ENCODE measurements at regions of chr4 and their contacts with region 1.

Region 1: GRCh38 chr4:70687821-70688794 is at the start of gene UTP3:
- DNase-seq: peak; percentile 95
- H3K4me3 ChIP-seq: peak within 1 kb of the TSS; percentile 65 to 82
- H3K27ac ChIP-seq: peak within 1 kb of the TSS; percentile 88 to 95
- H3K4me1 ChIP-seq: peaks cover 6% of the 10 kb centered on the region
- H3K27me3 ChIP-seq: no peaks in the 10 kb centered on the region
- CTCF ChIP-seq: peak; percentile 92 to 98 (median 97)
- POLR2A ChIP-seq: peak; percentile 51
- total RNA-seq, gene UTP3: 13.4 to 19.7 TPM

Region 2: GRCh38 chr4:70704331-70705145 is 16.4 kb after region 1 on chr4:
- intact Hi-C with region 1: loop called (anchors 2 kb)
- DNase-seq: peak; percentile 78
- H3K4me3 ChIP-seq: peak overlapping the region; percentile 82 to 95
- H3K27ac ChIP-seq: peak overlapping the region; percentile 92 to 97
- H3K4me1 ChIP-seq: peaks cover 3% of the 10 kb centered on the region
- H3K27me3 ChIP-seq: no peaks in the 10 kb centered on the region
- CTCF ChIP-seq: peak; percentile 20 to 35 (median 32)
- POLR2A ChIP-seq: peak; percentile 47

Region 3: DNA sequence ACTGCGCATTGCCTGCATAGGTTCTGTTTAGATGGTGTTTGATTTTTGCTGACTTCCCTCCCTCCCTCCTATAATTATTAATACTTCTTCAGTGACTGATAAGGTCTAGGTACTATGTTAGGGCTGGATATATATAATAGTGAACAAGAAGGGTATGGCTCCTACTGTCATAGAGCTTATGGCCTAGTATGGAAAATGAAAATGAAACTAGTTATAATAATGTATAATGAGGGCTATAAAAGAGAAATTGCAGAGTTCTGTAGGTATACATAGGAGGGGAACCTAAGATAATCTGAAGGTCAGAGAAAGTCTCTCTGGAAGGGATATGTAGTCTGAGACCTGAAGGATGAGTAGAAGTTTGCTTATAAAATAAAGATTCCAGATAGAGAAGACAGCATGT is 407.4 kb after region 1 on chr4:
- intact Hi-C with region 1: no loop called
- DNase-seq: no peak
- H3K4me3 ChIP-seq: no peak overlapping the region
- H3K27ac ChIP-seq: no peak overlapping the region
- H3K4me1 ChIP-seq: no peaks in the 10 kb centered on the region
- H3K27me3 ChIP-seq: no peaks in the 10 kb centered on the region
- CTCF ChIP-seq: no peak
- POLR2A ChIP-seq: no peak

Measured in prostate gland (tissue), 2 donors.